ENCODE measurements at regions of chrX and their contacts with region 1.

Region 1: GRCh38 chrX:153470435-153471363 is at the start of gene HAUS7:
- DNase-seq: peak; percentile 95
- H3K4me3 Mint-ChIP-seq: peak within 1 kb of the TSS; percentile 86
- H3K27ac Mint-ChIP-seq: peak within 1 kb of the TSS; percentile 84
- H3K4me1 Mint-ChIP-seq: peaks cover 4% of the 10 kb centered on the region
- H3K27me3 Mint-ChIP-seq: peaks cover 2% of the 10 kb centered on the region
- total RNA-seq, gene HAUS7: 75.7 and 79.4 TPM in 2 replicates

Region 2: GRCh38 chrX:152830312-152831305 is 640.1 kb before region 1 on chrX and contains the starts of genes CETN2 and NSDHL:
- intact Hi-C with region 1: loop called (anchors 5 kb)
- DNase-seq: peak; percentile 98
- H3K4me3 Mint-ChIP-seq: peak within 1 kb of the TSS; percentile 92
- H3K27ac Mint-ChIP-seq: peak within 1 kb of the TSS; percentile 92
- H3K4me1 Mint-ChIP-seq: peaks cover 14% of the 10 kb centered on the region
- H3K27me3 Mint-ChIP-seq: no peaks in the 10 kb centered on the region
- total RNA-seq, gene CETN2: 11.3 and 12.4 TPM in 2 replicates
- total RNA-seq, gene NSDHL: 22.3 and 23.4 TPM in 2 replicates

Region 3: GRCh38 chrX:152958524-152959465 is 511.9 kb before region 1 on chrX:
- intact Hi-C with region 1: loop called (anchors 1 kb)
- DNase-seq: peak; percentile 96
- H3K4me3 Mint-ChIP-seq: peak overlapping the region; percentile 72
- H3K27ac Mint-ChIP-seq: peak overlapping the region; percentile 91
- H3K4me1 Mint-ChIP-seq: peaks cover 7% of the 10 kb centered on the region
- H3K27me3 Mint-ChIP-seq: peaks cover 2% of the 10 kb centered on the region

Region 4: DNA sequence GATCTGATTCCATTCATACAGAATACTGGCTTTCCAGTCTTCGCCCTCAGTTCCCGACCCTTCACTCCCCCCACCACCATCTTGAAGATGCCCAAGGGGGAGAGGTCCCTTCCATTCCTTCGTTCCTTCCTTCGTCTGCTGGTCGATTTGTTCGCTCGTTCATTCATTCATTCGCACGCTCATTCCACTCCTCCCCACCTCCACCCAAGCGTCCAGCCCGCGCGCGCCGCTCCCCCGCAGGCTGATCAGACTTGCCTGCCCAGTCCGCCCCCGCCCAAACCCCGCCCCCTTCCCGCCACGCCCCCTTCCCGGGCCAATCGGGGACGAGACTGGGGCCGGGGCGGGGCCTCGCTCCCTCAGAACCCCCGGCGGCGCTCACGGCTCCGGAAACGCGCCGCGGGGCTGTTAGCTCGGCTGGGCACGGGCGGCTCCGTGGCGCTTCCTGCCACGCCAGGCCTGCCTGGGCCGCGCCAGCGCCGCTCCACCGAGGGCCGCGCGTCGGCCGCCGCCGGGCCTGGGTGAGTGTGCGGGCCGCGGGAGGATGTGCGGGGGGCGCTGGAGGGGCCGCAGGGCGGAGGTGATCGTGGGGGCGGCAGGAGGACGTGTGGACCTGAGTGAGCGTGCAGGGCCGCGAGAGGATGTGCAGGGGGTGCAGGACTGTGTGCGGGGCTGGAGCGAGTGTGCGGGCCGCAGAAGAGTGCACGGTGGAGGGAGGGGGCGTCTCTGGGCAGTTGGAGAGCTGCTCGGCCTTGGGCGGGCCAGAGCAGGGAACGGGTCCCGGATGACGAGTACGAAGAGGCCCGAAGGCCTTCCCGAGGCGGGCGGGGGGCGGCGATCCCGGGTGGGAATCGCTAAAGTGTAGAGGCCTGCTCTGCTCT is 136.7 kb before region 1 on chrX and contains the start of gene ZNF275:
- intact Hi-C with region 1: loop called (anchors 10 kb)
- DNase-seq: peak; percentile 95
- H3K4me3 Mint-ChIP-seq: peak within 1 kb of the TSS; percentile 83
- H3K27ac Mint-ChIP-seq: peak within 1 kb of the TSS; percentile 92
- H3K4me1 Mint-ChIP-seq: peaks cover 39% of the 10 kb centered on the region
- H3K27me3 Mint-ChIP-seq: peaks cover 3% of the 10 kb centered on the region
- total RNA-seq, gene ZNF275: 20.1 and 22.1 TPM in 2 replicates

Region 5: GRCh38 chrX:153459986-153460385 is 10.7 kb before region 1 on chrX:
- intact Hi-C with region 1: no loop called
- DNase-seq: no peak
- H3K4me3 Mint-ChIP-seq: no peak overlapping the region
- H3K27ac Mint-ChIP-seq: no peak overlapping the region
- H3K4me1 Mint-ChIP-seq: no peaks in the 10 kb centered on the region
- H3K27me3 Mint-ChIP-seq: no peaks in the 10 kb centered on the region

Region 6: GRCh38 chrX:153507484-153508178 is 36.9 kb after region 1 on chrX:
- intact Hi-C with region 1: loop called (anchors 1 kb)
- DNase-seq: peak; percentile 94
- H3K4me3 Mint-ChIP-seq: no peak overlapping the region
- H3K27ac Mint-ChIP-seq: no peak overlapping the region
- H3K4me1 Mint-ChIP-seq: no peaks in the 10 kb centered on the region
- H3K27me3 Mint-ChIP-seq: no peaks in the 10 kb centered on the region

Region 7: GRCh38 chrX:153599192-153600031 is 128.7 kb after region 1 on chrX:
- intact Hi-C with region 1: loop called (anchors 1 kb)
- DNase-seq: peak; percentile 97
- H3K4me3 Mint-ChIP-seq: peak overlapping the region; percentile 87
- H3K27ac Mint-ChIP-seq: peak overlapping the region; percentile 73
- H3K4me1 Mint-ChIP-seq: peaks cover 25% of the 10 kb centered on the region
- H3K27me3 Mint-ChIP-seq: no peaks in the 10 kb centered on the region

Region 8: GRCh38 chrX:153724252-153725040 is 253.7 kb after region 1 on chrX and contains the starts of genes ABCD1 and BCAP31:
- intact Hi-C with region 1: loop called (anchors 5 kb)
- DNase-seq: peak; percentile 97
- H3K4me3 Mint-ChIP-seq: peak within 1 kb of the TSS; percentile 90
- H3K27ac Mint-ChIP-seq: peak within 1 kb of the TSS; percentile 89
- H3K4me1 Mint-ChIP-seq: peaks cover 14% of the 10 kb centered on the region
- H3K27me3 Mint-ChIP-seq: no peaks in the 10 kb centered on the region
- total RNA-seq, gene ABCD1: 6.6 and 7.7 TPM in 2 replicates
- total RNA-seq, gene BCAP31: 154 and 157 TPM in 2 replicates

Region 9: GRCh38 chrX:154040307-154040756 is 569.6 kb after region 1 on chrX:
- intact Hi-C with region 1: no loop called
- DNase-seq: no peak
- H3K4me3 Mint-ChIP-seq: no peak overlapping the region
- H3K27ac Mint-ChIP-seq: peak overlapping the region; percentile 64
- H3K4me1 Mint-ChIP-seq: peaks cover 21% of the 10 kb centered on the region
- H3K27me3 Mint-ChIP-seq: no peaks in the 10 kb centered on the region

Measured in activated CD4-positive, alpha-beta T cell treated with anti-CD3 and anti-CD28 coated beads, Interleukin-2, amount 10 ng/mL, durations not matched to agents 24 days and 14 days (primary cell).